Heart right ventricle (tissue), 16 donors: ENCODE measurements at regions of chr18 and their contacts with region 1.

Region 1: GRCh38 chr18:54679318-54680149 is 88.5 kb downstream of the DYNAP start:
- DNase-seq: peak in 1 of 2 donors; percentile 14
- ATAC-seq: peak in 4 of 8 donors; percentile 35 to 61 (median 54)
- H3K4me3 ChIP-seq: no peak overlapping the region
- H3K27ac ChIP-seq: no peak overlapping the region
- H3K4me1 ChIP-seq: peaks cover 0 to 3% (median 0%) of the 10 kb centered on the region in 9 donors
- H3K27me3 ChIP-seq: no peaks in the 10 kb centered on the region
- CTCF ChIP-seq: peak in 8 of 9 donors; percentile 29 to 60 (median 48)

Region 2: DNA sequence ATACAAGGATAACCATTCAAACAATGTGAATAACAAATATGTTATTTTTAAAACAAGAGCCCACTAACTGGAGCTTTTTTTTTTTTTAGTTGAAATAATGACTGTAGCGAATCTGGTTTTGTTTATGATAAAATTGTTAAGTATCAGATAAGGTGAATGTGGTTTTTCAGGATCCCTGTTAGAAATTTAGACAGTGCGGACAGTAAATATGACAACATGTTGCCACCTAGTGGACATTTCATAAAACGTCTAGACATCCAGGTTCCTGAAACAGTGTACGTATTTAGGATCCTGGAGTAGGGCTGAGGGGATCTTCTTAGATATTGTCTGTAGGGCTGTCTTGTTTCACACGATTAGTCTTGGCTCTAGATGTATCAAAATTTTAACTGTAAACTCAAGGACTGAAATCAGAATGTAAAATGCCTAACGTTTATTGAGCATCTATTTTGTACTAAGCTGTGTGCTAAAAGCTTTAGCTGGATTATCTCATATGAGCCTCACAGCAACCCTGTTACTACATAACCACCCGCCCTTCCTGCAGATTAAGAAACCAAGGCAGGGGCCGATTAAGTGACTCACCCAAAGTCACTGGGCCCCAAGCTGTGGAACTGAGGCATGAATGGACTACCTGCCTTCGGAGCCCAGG is 303.6 kb after region 1 on chr18:
- intact Hi-C with region 1: loop called (anchors 1 to 10 kb)
- DNase-seq: peak in 1 of 2 donors; percentile 12
- ATAC-seq: peak in 6 of 8 donors; percentile 52 to 70 (median 62)
- H3K4me3 ChIP-seq: no peak overlapping the region
- H3K27ac ChIP-seq: no peak overlapping the region
- H3K4me1 ChIP-seq: no peaks in the 10 kb centered on the region
- H3K27me3 ChIP-seq: no peaks in the 10 kb centered on the region
- CTCF ChIP-seq: peak; percentile 48 to 84 (median 75)